HepG2 (cell line): ENCODE measurements at regions of chr11 and their contacts with region 1.

Region 1: DNA sequence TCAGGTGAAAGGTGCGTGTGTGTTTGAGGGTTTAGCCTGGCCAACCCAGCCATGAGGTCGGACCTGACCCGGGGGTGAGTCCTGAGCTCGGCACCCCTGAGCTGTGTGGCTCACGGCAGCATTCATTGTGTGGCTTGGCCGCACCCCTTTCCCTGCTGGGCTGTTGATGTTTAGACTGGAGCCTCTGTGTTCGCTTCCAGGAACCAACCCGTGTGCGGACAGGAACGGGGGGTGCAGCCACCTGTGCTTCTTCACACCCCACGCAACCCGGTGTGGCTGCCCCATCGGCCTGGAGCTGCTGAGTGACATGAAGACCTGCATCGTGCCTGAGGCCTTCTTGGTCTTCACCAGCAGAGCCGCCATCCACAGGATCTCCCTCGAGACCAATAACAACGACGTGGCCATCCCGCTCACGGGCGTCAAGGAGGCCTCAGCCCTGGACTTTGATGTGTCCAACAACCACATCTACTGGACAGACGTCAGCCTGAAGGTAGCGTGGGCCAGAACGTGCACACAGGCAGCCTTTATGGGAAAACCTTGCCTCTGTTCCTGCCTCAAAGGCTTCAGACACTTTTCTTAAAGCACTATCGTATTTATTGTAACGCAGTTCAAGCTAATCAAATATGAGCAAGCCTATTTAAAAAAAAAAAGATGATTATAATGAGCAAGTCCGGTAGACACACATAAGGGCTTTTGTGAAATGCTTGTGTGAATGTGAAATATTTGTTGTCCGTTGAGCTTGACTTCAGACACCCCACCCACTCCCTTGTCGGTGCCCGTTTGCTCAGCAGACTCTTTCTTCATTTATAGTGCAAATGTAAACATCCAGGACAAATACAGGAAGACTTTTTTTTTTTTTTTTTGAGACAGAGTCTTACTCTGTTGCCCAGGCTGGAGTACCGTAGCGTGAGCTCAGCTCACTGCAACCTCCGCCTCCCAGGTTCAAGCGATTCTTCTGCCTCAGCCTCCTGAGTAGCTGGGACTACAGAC is 53.9 kb upstream of the PPP6R3 start:
- DNase-seq: peak; percentile 38
- ATAC-seq: peak; percentile 13; the same call in 2 of the 3 replicates
- H3K4me3 ChIP-seq: no peak overlapping the region
- H3K27ac ChIP-seq: peak overlapping the region; percentile 27
- H3K4me1 ChIP-seq: peaks cover 19% of the 10 kb centered on the region
- H3K27me3 ChIP-seq: no peaks in the 10 kb centered on the region
- CTCF ChIP-seq: no peak
- EP300 ChIP-seq: no peak
- POLR2A ChIP-seq: no peak
- RAD21 ChIP-seq: no peak

Region 2: GRCh38 chr11:67409261-67409666 is 997.4 kb before region 1 on chr11:
- CTCF ChIA-PET with region 1: no interaction called
- POLR2A ChIA-PET with region 1: no interaction called
- in situ Hi-C with region 1: no loop called
- intact Hi-C with region 1: no loop called
- DNase-seq: no peak
- ATAC-seq: no peak
- H3K4me3 ChIP-seq: no peak overlapping the region
- H3K27ac ChIP-seq: no peak overlapping the region
- H3K4me1 ChIP-seq: peaks cover 65% of the 10 kb centered on the region
- H3K27me3 ChIP-seq: peaks cover 3 to 34% of the 10 kb centered on the region in 2 experiments; a peak in 4 of 5 replicates
- CTCF ChIP-seq: no peak
- EP300 ChIP-seq: no peak
- POLR2A ChIP-seq: no peak
- RAD21 ChIP-seq: no peak

Region 3: DNA sequence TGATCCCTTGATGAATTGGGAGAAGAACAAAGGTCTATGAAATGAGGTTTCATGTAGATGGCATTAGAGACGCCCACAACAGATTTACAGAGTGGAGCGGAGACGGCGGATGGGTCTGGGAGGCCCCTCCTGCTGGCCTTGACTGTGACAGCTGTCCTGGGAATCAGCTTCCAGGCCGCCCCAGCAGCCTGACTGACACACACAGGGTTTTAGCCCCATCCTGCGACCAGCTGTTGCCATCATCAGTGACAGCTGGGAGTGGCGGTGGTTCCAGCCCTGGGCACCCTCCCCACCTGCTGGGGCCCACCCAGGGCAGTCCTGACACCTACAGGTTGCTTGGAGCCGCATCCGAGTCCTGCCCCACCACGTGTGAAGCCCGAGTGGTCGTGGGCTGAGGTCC is 10.1 kb before region 1 on chr11:
- CTCF ChIA-PET with region 1: no interaction called
- POLR2A ChIA-PET with region 1: no interaction called
- in situ Hi-C with region 1: no loop called
- intact Hi-C with region 1: no loop called
- DNase-seq: no peak
- ATAC-seq: peak; percentile 25; the same call in 2 of the 3 replicates
- H3K4me3 ChIP-seq: no peak overlapping the region
- H3K27ac ChIP-seq: no peak overlapping the region
- H3K4me1 ChIP-seq: peaks cover 12% of the 10 kb centered on the region; the same call in 1 of the 2 replicates
- H3K27me3 ChIP-seq: no peaks in the 10 kb centered on the region
- CTCF ChIP-seq: peak; percentile 29; the same call in 1 of the 2 replicates
- EP300 ChIP-seq: no peak
- POLR2A ChIP-seq: no peak
- RAD21 ChIP-seq: no peak

Region 4: DNA sequence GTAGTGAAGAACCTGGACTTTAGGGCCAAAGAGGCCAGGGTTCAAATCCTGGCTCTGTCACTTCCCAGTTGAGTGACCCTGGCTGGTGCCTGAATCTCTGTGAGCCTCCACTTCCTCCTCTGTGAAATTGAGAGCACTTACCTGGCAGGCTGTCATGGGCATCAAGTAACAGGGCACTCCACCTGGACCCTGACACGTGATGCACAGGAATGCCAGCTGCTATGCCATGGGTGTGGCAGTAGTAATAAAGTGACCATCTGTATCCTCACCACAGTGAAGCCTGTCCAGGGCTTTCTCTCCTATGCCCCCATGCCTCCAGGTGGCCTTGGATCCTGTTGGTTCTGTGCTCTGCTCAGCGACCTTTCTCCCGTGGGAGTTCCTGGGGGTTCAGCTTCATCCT is 24.2 kb after region 1 on chr11:
- CTCF ChIA-PET with region 1: no interaction called
- POLR2A ChIA-PET with region 1: no interaction called
- in situ Hi-C with region 1: no loop called
- intact Hi-C with region 1: no loop called
- DNase-seq: no peak
- ATAC-seq: no peak
- H3K4me3 ChIP-seq: no peak overlapping the region
- H3K27ac ChIP-seq: no peak overlapping the region
- H3K4me1 ChIP-seq: no peaks in the 10 kb centered on the region
- H3K27me3 ChIP-seq: no peaks in the 10 kb centered on the region
- CTCF ChIP-seq: no peak
- EP300 ChIP-seq: no peak
- POLR2A ChIP-seq: no peak
- RAD21 ChIP-seq: no peak

Region 5: GRCh38 chr11:68550485-68550817 is 143.8 kb after region 1 on chr11:
- CTCF ChIA-PET with region 1: no interaction called
- POLR2A ChIA-PET with region 1: no interaction called
- in situ Hi-C with region 1: no loop called
- intact Hi-C with region 1: loop called (anchors 5 kb)
- DNase-seq: no peak
- ATAC-seq: no peak
- H3K4me3 ChIP-seq: no peak overlapping the region
- H3K27ac ChIP-seq: no peak overlapping the region
- H3K4me1 ChIP-seq: peaks cover 9% of the 10 kb centered on the region
- H3K27me3 ChIP-seq: no peaks in the 10 kb centered on the region
- CTCF ChIP-seq: no peak
- EP300 ChIP-seq: no peak
- POLR2A ChIP-seq: no peak
- RAD21 ChIP-seq: no peak